ENCODE measurements at regions of chr22 and their contacts with region 1.

Region 1: GRCh38 chr22:33302049-33302545 is 243.9 kb upstream of the SYN3 start:
- DNase-seq: peak in 6 of 9 donors; percentile 3 to 56 (median 14)
- ATAC-seq: peak; percentile 56
- H3K4me3 ChIP-seq: no peak overlapping the region
- H3K4me3 Mint-ChIP-seq: peak overlapping the region in 2 of 10 donors; percentile 7 to 64
- H3K27ac ChIP-seq: no peak overlapping the region
- H3K27ac Mint-ChIP-seq: no peak overlapping the region
- H3K4me1 ChIP-seq: no peaks in the 10 kb centered on the region
- H3K4me1 Mint-ChIP-seq: peaks cover 0 to 4% (median 0%) of the 10 kb centered on the region in 7 donors
- H3K27me3 ChIP-seq: no peaks in the 10 kb centered on the region
- H3K27me3 Mint-ChIP-seq: peaks cover 0 to 6% (median 0%) of the 10 kb centered on the region in 5 donors

Region 2: GRCh38 chr22:33401291-33401690 is 99.2 kb after region 1 on chr22:
- CTCF ChIA-PET with region 1: no interaction called
- POLR2A ChIA-PET with region 1: no interaction called
- intact Hi-C with region 1: no loop called
- DNase-seq: no peak
- ATAC-seq: no peak
- H3K4me3 ChIP-seq: no peak overlapping the region
- H3K4me3 Mint-ChIP-seq: no peak overlapping the region
- H3K27ac ChIP-seq: no peak overlapping the region
- H3K27ac Mint-ChIP-seq: no peak overlapping the region
- H3K4me1 ChIP-seq: no peaks in the 10 kb centered on the region
- H3K4me1 Mint-ChIP-seq: peaks cover 0 to 1% (median 0%) of the 10 kb centered on the region in 7 donors
- H3K27me3 ChIP-seq: no peaks in the 10 kb centered on the region
- H3K27me3 Mint-ChIP-seq: no peaks in the 10 kb centered on the region

Region 3: DNA sequence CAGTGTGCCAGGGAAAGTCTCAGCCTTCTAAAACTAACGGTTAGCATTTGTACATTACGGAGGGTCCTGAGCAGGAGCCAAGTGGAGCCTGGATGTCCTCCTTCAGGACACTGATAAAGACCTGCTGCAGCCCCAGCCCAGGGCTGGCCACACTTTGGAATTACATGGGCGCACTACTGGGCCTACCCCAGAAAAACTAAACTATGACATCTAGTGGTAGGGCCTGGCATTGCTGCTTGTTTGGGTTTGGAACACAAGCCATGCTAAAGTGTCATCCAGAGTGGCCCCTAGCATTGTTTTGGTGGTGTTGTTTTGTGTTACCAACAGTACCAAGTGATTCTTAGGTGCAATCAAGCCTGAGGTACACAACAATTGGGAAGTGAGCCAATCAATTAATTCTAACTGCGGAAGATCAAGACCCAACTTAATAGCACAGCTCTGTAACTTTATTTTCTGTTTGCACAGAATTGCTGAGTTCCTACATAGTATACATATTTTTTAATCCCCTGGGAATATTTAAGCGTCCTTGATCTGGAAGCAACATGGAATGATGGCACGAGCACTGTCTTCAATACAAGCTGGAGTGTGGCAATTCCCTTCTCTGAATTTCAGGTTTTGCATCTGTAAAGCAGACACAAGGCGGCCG is 277.5 kb after region 1 on chr22:
- CTCF ChIA-PET with region 1: no interaction called
- POLR2A ChIA-PET with region 1: no interaction called
- intact Hi-C with region 1: loop called in 1 of 2 experiments (anchors 1 kb)
- DNase-seq: peak in 3 of 9 donors; percentile 6 to 43 (median 9)
- ATAC-seq: peak; percentile 40
- H3K4me3 ChIP-seq: no peak overlapping the region
- H3K4me3 Mint-ChIP-seq: no peak overlapping the region
- H3K27ac ChIP-seq: no peak overlapping the region
- H3K27ac Mint-ChIP-seq: no peak overlapping the region
- H3K4me1 ChIP-seq: no peaks in the 10 kb centered on the region
- H3K4me1 Mint-ChIP-seq: no peaks in the 10 kb centered on the region
- H3K27me3 ChIP-seq: no peaks in the 10 kb centered on the region
- H3K27me3 Mint-ChIP-seq: peaks cover 0 to 4% (median 0%) of the 10 kb centered on the region in 5 donors

Region 4: DNA sequence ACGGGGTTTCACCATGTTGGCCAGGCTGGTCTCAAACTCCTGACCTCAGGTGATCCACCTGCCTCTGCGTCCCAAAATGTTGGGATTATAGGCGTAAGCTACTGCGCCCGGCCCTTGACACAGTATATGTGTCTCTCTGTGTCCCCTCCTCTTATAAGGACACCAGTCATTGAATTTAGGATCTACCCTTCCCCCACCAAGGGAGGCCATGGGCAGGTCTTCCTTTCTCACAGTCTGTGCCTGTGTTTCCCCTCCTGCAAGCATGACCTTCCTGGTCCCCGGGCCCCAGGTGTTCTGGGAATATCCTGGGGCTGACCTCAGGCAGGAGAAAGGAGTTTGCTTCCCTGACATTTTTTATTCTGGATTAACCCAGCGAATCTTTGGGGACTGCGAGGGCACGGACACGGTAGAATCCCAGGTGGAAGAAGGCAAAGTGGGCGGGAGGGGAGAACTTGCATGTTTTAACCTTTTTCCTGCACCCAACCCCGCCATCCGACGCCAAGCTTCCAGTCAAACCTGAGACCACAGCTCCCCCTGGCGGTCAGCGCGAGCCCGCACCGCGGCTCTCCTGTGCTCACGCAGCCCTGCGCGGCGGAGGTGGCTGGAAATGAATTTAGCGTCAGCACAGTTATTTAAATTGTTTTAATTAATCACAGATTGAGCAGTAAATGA is 1721.7 kb after region 1 on chr22:
- CTCF ChIA-PET with region 1: no interaction called
- POLR2A ChIA-PET with region 1: no interaction called
- intact Hi-C with region 1: loop called (anchors 2 to 5 kb)
- DNase-seq: peak in 6 of 9 donors; percentile 6 to 75 (median 18)
- ATAC-seq: no peak
- H3K4me3 ChIP-seq: no peak overlapping the region
- H3K4me3 Mint-ChIP-seq: no peak overlapping the region
- H3K27ac ChIP-seq: no peak overlapping the region
- H3K27ac Mint-ChIP-seq: no peak overlapping the region
- H3K4me1 ChIP-seq: no peaks in the 10 kb centered on the region
- H3K4me1 Mint-ChIP-seq: peaks cover 0 to 3% (median 2%) of the 10 kb centered on the region in 7 donors
- H3K27me3 ChIP-seq: no peaks in the 10 kb centered on the region
- H3K27me3 Mint-ChIP-seq: peaks cover 8 to 64% (median 49%) of the 10 kb centered on the region in 5 donors

Region 5: GRCh38 chr22:35150183-35151107 is 1848.3 kb after region 1 on chr22:
- CTCF ChIA-PET with region 1: no interaction called
- POLR2A ChIA-PET with region 1: no interaction called
- intact Hi-C with region 1: loop called in 1 of 2 experiments (anchors 10 kb)
- DNase-seq: peak in 8 of 9 donors; percentile 12 to 69 (median 34)
- ATAC-seq: peak; percentile 49
- H3K4me3 ChIP-seq: no peak overlapping the region
- H3K4me3 Mint-ChIP-seq: no peak overlapping the region
- H3K27ac ChIP-seq: no peak overlapping the region
- H3K27ac Mint-ChIP-seq: peak overlapping the region in 1 of 9 donors; percentile 14
- H3K4me1 ChIP-seq: no peaks in the 10 kb centered on the region
- H3K4me1 Mint-ChIP-seq: peaks cover 0 to 7% (median 0%) of the 10 kb centered on the region in 7 donors
- H3K27me3 ChIP-seq: peaks cover 0 to 7% of the 10 kb centered on the region in 2 donors
- H3K27me3 Mint-ChIP-seq: peaks cover 4 to 51% (median 37%) of the 10 kb centered on the region in 5 donors

Measured in naive thymus-derived CD4-positive, alpha-beta T cell (primary cell).